ENCODE measurements at regions of chr1 and their contacts with region 1.

Region 1: GRCh38 chr1:111222308-111223125 is 5.0 kb upstream of the CHI3L2 start:
- DNase-seq: peak; percentile 81
- ATAC-seq: peak; percentile 78 to 87

Region 2: GRCh38 chr1:111334169-111334568 is 111.7 kb after region 1 on chr1:
- intact Hi-C with region 1: loop called in 1 of 2 experiments (anchors 10 kb)
- DNase-seq: peak; percentile 25
- ATAC-seq: peak; percentile 59 to 63

Region 3: DNA sequence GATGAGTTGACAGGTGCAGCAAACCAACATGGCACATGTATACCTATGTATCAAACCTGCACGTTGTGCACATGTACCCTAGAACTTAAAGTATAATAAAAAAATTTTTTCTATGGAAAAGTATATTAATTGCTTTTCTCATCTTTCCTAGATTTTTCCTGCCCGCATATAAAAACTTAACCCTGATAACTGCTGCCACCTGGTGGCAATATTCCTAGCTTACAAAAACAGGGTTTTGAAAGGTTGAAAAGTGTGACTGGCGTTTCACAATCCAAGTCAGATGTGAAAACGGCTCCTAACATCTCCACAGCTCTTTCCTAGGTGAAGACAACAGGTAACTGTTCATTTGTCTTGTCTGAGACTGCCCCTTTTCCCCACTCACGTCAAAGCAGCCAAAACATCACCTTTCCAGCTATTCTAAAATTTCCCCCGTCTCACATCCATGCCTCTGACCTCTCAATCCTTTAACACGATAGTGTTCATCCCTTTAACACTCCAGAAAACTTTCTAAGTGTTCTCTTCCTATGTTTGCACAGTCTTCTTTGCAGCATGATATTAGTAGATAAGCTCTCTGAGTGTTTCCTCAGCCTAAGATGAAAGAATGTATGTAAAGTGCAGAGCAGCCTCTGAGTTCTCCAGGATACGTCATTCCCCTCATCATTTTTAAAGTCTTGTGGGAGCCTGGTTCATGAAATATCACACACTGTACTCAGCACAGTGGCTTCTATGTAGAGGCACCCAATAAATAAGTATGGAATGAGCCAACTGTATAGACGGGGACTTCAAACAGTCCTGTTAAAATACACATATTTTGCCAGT is 177.5 kb after region 1 on chr1:
- intact Hi-C with region 1: loop called (anchors 1 to 5 kb)
- DNase-seq: peak; percentile 26
- ATAC-seq: peak in 1 of 2 donors; percentile 23